ENCODE measurements at regions of chr1 and their contacts with region 1.

Region 1: GRCh38 chr1:198157241-198157846 is 546 bp downstream of the NEK7 start:
- DNase-seq: peak; percentile 93
- H3K4me3 ChIP-seq: peak overlapping the region; percentile 82 to 95 (median 91)
- H3K27ac ChIP-seq: peak overlapping the region; percentile 45
- H3K4me1 ChIP-seq: peaks cover 59% of the 10 kb centered on the region
- H3K27me3 ChIP-seq: no peaks in the 10 kb centered on the region
- CTCF ChIP-seq: no peak
- POLR2A ChIP-seq: no peak

Region 2: DNA sequence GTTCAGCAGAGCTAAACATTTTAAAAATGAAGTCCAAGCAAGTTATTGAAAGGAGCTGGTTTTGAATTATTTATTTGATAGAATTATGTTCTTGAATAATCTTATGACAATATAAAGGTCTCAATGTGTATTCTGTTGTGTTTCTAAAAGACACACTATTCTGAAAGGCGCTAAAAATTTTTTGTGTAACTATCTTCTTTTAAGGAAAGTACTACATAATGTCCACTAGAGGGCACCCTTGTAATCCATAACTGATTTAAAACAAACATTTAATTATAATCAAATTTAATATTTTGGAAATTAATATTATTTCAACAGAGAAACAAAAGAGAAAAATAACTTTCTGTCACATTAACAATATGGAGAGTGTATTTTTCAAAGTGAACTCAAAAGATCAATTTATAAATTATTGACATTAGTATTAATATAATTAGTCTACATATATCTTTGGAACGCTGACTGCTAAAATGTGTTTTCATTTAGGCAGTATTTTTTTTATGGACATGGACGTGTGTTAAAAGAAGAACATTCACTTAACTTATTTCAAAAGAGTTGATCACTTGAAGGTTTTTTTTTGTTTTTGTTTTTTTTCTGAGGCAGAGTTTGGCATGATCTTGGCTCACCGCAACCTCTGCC is 630.5 kb before region 1 on chr1:
- CTCF ChIA-PET with region 1: no interaction called
- POLR2A ChIA-PET with region 1: no interaction called
- dilution Hi-C with region 1: no loop called
- intact Hi-C with region 1: loop called (anchors 5 kb)
- DNase-seq: peak; percentile 31
- H3K4me3 ChIP-seq: no peak overlapping the region
- H3K27ac ChIP-seq: no peak overlapping the region
- H3K4me1 ChIP-seq: no peaks in the 10 kb centered on the region
- H3K27me3 ChIP-seq: no peaks in the 10 kb centered on the region
- CTCF ChIP-seq: peak; percentile 16 to 18
- POLR2A ChIP-seq: no peak

Region 3: GRCh38 chr1:197902454-197903195 is 254.7 kb before region 1 on chr1 and contains the start of gene C1orf53:
- CTCF ChIA-PET with region 1: interaction called, 3 read pairs
- POLR2A ChIA-PET with region 1: no interaction called
- dilution Hi-C with region 1: no loop called
- intact Hi-C with region 1: loop called (anchors 2 kb)
- DNase-seq: peak; percentile 91
- H3K4me3 ChIP-seq: peak within 1 kb of the TSS; percentile 29 to 76 (median 65)
- H3K27ac ChIP-seq: peak within 1 kb of the TSS; percentile 52
- H3K4me1 ChIP-seq: peaks cover 14% of the 10 kb centered on the region
- H3K27me3 ChIP-seq: peaks cover 2 to 22% of the 10 kb centered on the region in 2 experiments
- CTCF ChIP-seq: no peak
- POLR2A ChIP-seq: peak; percentile 74
- total RNA-seq, gene C1orf53: 2.1 and 3.5 TPM in 2 replicates

Region 4: DNA sequence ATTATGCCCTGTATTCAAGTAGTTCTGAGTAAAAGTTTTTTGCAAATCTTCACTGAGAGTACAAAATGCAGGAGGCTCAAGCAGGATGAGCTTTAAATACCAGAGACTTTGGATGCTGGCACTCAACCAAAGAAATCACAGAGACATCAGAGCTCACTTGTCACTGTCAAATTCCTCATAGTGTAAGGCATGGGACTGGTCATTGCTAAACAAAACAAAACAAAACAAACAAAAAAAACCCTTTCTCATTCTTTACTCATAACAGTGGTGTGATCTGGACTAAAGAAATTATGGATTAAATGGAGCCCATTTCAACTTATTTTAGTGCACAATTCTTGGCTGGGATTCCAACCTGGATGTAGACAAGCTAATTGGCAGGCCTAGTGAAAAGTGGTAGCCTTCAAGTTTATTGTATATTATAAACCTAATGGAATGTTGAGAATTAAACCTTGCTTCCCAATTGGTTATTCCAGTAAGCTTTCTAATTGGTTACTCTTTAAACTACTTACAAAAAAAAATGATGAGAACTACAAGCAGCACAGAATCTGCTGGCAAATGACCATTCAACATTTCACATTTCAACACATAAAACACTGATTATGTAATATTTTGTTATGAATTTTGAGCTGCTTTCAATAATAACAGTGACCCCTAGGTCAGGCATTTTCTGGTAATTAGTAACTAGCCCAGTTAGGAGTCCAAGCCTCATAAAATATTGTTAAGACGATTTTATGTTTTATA is 31.2 kb before region 1 on chr1:
- CTCF ChIA-PET with region 1: interaction called, 15 read pairs
- POLR2A ChIA-PET with region 1: interaction called, 3 read pairs
- dilution Hi-C with region 1: no loop called
- intact Hi-C with region 1: loop called (anchors 1 kb)
- DNase-seq: peak; percentile 80
- H3K4me3 ChIP-seq: no peak overlapping the region
- H3K27ac ChIP-seq: peak overlapping the region; percentile 52
- H3K4me1 ChIP-seq: peaks cover 33% of the 10 kb centered on the region
- H3K27me3 ChIP-seq: no peaks in the 10 kb centered on the region
- CTCF ChIP-seq: no peak
- POLR2A ChIP-seq: no peak

Region 5: DNA sequence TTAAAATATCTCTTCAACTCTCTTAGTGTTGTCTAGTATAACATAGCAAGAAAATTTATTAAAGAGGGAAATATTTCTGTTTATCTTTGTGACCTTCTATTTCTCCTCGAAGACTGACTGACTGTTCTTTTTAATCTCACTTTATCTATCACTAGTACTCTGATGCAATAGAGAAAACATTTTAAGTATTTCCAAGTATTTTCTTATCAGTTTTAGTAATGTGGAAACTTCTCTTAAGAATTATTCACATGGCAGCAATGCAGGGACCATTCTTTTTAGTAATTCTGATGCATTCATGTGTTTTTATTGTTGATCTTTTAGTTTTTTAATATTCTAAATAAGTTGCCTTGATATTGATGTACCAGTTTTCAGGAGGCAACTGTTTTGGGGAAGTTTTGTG is 115.1 kb after region 1 on chr1:
- CTCF ChIA-PET with region 1: interaction called, 5 read pairs
- POLR2A ChIA-PET with region 1: no interaction called
- dilution Hi-C with region 1: no loop called
- intact Hi-C with region 1: loop called (anchors 1 kb)
- DNase-seq: peak; percentile 56
- H3K4me3 ChIP-seq: no peak overlapping the region
- H3K27ac ChIP-seq: peak overlapping the region; percentile 64
- H3K4me1 ChIP-seq: peaks cover 69% of the 10 kb centered on the region
- H3K27me3 ChIP-seq: no peaks in the 10 kb centered on the region
- CTCF ChIP-seq: no peak
- POLR2A ChIP-seq: peak; percentile 42

Region 6: GRCh38 chr1:198669023-198669698 is 511.8 kb after region 1 on chr1:
- CTCF ChIA-PET with region 1: no interaction called
- POLR2A ChIA-PET with region 1: no interaction called
- dilution Hi-C with region 1: no loop called
- intact Hi-C with region 1: loop called (anchors 5 kb)
- DNase-seq: peak; percentile 78
- H3K4me3 ChIP-seq: no peak overlapping the region
- H3K27ac ChIP-seq: peak overlapping the region; percentile 80
- H3K4me1 ChIP-seq: peaks cover 16% of the 10 kb centered on the region
- H3K27me3 ChIP-seq: no peaks in the 10 kb centered on the region
- CTCF ChIP-seq: no peak
- POLR2A ChIP-seq: peak; percentile 68